CD4-positive, alpha-beta T cell (primary cell): ENCODE measurements at regions of chrX and their contacts with region 1.

Region 1: GRCh38 chrX:87468941-87469340 is 48.7 kb upstream of the KLHL4 start:
- DNase-seq: no peak
- ATAC-seq: no peak
- H3K4me3 ChIP-seq: no peak overlapping the region
- H3K4me3 Mint-ChIP-seq: no peak overlapping the region
- H3K27ac ChIP-seq: no peak overlapping the region
- H3K27ac Mint-ChIP-seq: no peak overlapping the region
- H3K4me1 ChIP-seq: no peaks in the 10 kb centered on the region
- H3K4me1 Mint-ChIP-seq: no peaks in the 10 kb centered on the region
- H3K27me3 ChIP-seq: no peaks in the 10 kb centered on the region
- H3K27me3 Mint-ChIP-seq: no peaks in the 10 kb centered on the region
- CTCF ChIP-seq: no peak

Region 2: GRCh38 chrX:87489071-87489470 is 20.1 kb after region 1 on chrX:
- CTCF ChIA-PET with region 1: no interaction called
- POLR2A ChIA-PET with region 1: no interaction called
- intact Hi-C with region 1: loop called in 1 of 2 experiments (anchors 2 kb)
- DNase-seq: no peak
- ATAC-seq: no peak
- H3K4me3 ChIP-seq: no peak overlapping the region
- H3K4me3 Mint-ChIP-seq: no peak overlapping the region
- H3K27ac ChIP-seq: no peak overlapping the region
- H3K27ac Mint-ChIP-seq: no peak overlapping the region
- H3K4me1 ChIP-seq: no peaks in the 10 kb centered on the region
- H3K4me1 Mint-ChIP-seq: no peaks in the 10 kb centered on the region
- H3K27me3 ChIP-seq: no peaks in the 10 kb centered on the region
- H3K27me3 Mint-ChIP-seq: no peaks in the 10 kb centered on the region
- CTCF ChIP-seq: no peak

Region 3: GRCh38 chrX:87924619-87925018 is 455.7 kb after region 1 on chrX:
- CTCF ChIA-PET with region 1: no interaction called
- POLR2A ChIA-PET with region 1: no interaction called
- intact Hi-C with region 1: no loop called
- DNase-seq: no peak
- ATAC-seq: no peak
- H3K4me3 ChIP-seq: no peak overlapping the region
- H3K4me3 Mint-ChIP-seq: no peak overlapping the region
- H3K27ac ChIP-seq: no peak overlapping the region
- H3K27ac Mint-ChIP-seq: no peak overlapping the region
- H3K4me1 ChIP-seq: no peaks in the 10 kb centered on the region
- H3K4me1 Mint-ChIP-seq: no peaks in the 10 kb centered on the region
- H3K27me3 ChIP-seq: no peaks in the 10 kb centered on the region
- H3K27me3 Mint-ChIP-seq: no peaks in the 10 kb centered on the region
- CTCF ChIP-seq: no peak